Activated CD4-positive, alpha-beta T cell treated with anti-CD3 and anti-CD28 coated beads, Interleukin-2, amount 10 ng/mL, durations not matched to agents 24 days and 14 days (primary cell): ENCODE measurements at regions of chr1 and their contacts with region 1.

Region 1: DNA sequence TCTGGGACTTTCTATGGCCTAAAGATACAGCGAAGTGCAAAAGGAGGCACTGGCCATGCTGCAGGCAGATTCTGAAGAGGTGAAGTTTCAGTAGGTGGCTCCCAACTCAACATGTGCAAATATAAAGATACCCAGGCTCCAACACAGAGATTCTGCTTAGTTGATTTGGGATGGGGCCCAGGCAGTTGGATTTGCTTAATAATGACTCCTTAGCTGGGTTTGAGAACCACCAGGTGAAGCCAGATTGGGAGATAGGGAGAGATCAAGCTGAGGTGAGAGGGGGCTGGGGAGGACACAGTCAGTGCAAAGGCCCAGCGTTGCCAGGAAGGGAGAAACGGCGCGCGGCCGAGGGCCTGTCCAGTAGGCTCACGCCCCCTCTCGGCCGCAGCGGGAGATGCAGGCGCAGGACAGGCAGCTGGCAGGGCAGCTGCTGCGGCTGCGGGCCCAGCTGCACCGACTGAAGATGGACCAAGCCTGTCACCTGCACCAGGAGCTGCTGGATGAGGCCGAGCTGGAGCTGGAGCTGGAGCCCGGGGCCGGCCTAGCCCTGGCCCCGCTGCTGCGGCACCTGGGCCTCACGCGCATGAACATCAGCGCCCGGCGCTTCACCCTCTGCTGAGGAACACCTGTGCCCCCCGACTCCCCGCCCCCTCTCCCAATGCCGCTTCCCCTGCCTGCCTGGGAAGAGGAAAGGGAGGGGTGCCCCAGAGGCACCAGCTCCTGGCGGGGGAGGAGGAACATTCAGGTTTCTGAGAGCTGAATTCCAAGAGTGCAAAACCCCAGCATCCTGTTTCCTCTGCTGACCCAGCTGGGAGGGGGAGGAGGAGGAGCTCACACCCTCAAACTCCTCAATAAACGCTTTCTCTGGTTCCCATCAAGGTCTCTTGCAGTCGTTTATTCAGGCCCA is 1.2 kb downstream of the FAM167B start:
- DNase-seq: peak; percentile 94
- H3K4me3 Mint-ChIP-seq: peak overlapping the region; percentile 69
- H3K27ac Mint-ChIP-seq: peak overlapping the region; percentile 97
- H3K4me1 Mint-ChIP-seq: peaks cover 58% of the 10 kb centered on the region
- H3K27me3 Mint-ChIP-seq: no peaks in the 10 kb centered on the region

Region 2: DNA sequence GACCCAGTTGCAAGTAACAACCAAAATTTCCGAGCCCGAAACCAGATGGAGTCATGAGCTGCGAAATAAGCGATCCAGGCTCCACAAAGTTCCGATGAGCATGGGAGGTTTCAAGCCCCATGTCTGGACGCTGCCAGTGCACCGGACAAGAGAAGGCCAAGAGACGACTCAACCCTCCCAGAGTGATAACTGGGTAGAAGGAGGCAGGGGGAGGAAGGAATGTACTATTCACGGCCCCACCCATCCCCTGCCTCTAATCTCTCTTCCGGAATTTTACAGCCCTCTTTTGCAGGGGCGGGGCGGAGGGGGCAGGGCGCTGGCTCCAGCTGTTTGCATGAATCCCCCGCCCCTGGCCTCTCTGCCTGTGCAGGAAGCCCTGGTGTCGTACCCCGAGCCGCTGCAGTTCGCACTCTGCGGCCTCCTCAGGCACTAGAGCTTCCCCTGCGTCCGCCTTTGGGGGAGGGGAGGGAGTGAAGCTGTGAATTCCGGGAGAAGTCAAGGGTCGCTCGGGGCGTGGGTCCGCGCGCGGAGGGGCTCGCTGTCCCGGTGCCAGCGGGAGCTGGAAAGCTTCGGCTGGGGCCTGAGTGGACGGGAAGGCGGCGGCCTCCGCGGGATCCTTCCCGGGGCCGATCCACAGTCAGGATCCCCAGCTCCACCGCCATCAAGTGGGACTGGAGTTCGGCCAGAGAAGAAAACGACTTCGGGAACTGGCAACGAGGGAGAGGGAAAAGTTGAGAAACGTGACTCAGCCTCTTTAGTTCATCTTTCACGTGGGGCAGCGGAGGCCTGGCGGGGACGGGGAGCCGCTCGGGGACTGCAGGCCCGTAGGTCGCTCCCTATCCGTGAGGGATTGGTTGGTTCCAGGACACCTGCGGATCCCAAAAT is 303.8 kb before region 1 on chr1:
- intact Hi-C with region 1: loop called (anchors 5 kb)
- DNase-seq: peak; percentile 97
- H3K4me3 Mint-ChIP-seq: peak overlapping the region; percentile 77
- H3K27ac Mint-ChIP-seq: peak overlapping the region; percentile 92
- H3K4me1 Mint-ChIP-seq: peaks cover 46% of the 10 kb centered on the region
- H3K27me3 Mint-ChIP-seq: no peaks in the 10 kb centered on the region

Region 3: DNA sequence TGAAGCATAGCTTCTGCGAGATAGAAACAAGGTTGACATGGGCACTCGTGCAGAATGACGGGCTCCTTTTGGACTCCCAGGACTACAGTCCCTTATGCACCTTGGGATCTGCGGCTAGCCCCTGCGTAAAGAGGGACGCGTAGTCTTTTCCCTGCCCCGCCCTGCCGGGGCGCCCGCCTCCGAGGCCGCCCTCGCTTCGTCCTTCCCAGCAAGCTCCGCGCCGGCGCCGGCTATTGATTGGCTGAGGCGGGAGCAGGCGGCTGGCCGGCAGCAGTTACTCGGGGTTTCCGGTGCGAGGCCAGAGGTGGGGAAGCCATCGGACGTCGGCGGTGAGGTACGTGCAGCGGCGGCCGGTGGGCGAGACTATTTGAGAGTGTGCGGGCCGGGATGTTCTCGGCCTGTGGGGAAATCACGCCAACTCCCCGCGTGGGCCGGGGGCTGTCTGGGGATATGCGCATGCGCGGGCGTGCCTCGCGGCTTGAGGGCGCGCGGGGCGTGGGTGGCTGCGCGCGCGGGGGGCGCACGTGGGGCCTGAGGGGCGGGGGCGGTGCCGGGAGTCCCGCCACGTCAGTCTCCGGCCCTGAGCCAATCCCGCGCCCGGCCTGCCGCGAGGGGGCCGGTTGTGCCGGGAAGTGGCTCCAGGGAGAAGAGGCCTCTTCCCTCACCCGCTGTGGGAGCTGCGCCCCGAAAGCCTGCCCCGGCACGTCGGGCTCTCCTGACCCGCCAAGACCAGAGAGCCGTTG is 68.6 kb before region 1 on chr1 and contains the start of gene TXLNA:
- intact Hi-C with region 1: loop called (anchors 5 kb)
- DNase-seq: peak; percentile 97
- H3K4me3 Mint-ChIP-seq: peak within 1 kb of the TSS; percentile 98
- H3K27ac Mint-ChIP-seq: peak within 1 kb of the TSS; percentile 99
- H3K4me1 Mint-ChIP-seq: peaks cover 39% of the 10 kb centered on the region
- H3K27me3 Mint-ChIP-seq: no peaks in the 10 kb centered on the region
- total RNA-seq, gene TXLNA: 105 and 106 TPM in 2 replicates

Region 4: GRCh38 chr1:32273388-32274208 is 25.4 kb after region 1 on chr1:
- intact Hi-C with region 1: loop called (anchors 1 kb)
- DNase-seq: peak; percentile 88
- H3K4me3 Mint-ChIP-seq: peak overlapping the region; percentile 88
- H3K27ac Mint-ChIP-seq: peak overlapping the region; percentile 86
- H3K4me1 Mint-ChIP-seq: peaks cover 56% of the 10 kb centered on the region
- H3K27me3 Mint-ChIP-seq: no peaks in the 10 kb centered on the region

Region 5: DNA sequence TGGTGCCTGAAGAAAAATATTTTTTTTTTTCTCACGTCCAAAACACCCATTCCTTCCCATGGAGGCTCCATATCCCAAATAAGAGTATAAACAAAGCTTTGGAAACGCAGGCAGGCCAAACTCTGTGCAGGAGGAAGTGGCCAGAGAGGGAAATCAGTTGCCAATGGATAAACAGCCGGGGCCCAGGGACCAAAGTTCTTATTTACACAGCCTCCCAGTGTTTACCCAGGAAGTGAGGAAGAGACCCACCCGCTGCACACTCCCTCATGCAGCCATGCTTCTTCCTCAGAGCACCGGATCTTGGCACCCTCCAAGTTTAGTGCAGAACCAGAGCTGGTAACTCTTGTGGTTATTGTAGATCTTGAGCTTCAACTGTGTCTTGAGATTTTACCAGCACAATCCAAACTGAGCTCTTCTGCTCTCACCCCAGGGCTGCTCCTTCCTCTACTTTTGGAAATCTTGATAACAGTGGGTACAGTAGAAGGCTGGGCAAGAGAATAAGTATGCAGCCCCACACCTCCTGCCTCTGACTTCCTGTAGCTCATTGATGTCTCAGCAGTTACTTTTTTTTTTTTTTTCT is 73.6 kb after region 1 on chr1:
- intact Hi-C with region 1: loop called (anchors 5 kb)
- DNase-seq: peak; percentile 78
- H3K4me3 Mint-ChIP-seq: peak overlapping the region; percentile 65
- H3K27ac Mint-ChIP-seq: peak overlapping the region; percentile 87
- H3K4me1 Mint-ChIP-seq: peaks cover 36% of the 10 kb centered on the region
- H3K27me3 Mint-ChIP-seq: no peaks in the 10 kb centered on the region

Region 6: GRCh38 chr1:32650752-32651460 is 402.7 kb after region 1 on chr1 and contains the start of gene RBBP4:
- intact Hi-C with region 1: loop called (anchors 2 kb)
- DNase-seq: peak; percentile 100
- H3K4me3 Mint-ChIP-seq: peak within 1 kb of the TSS; percentile 99
- H3K27ac Mint-ChIP-seq: peak within 1 kb of the TSS; percentile 100
- H3K4me1 Mint-ChIP-seq: peaks cover 37% of the 10 kb centered on the region
- H3K27me3 Mint-ChIP-seq: no peaks in the 10 kb centered on the region
- total RNA-seq, gene RBBP4: 329 and 331 TPM in 2 replicates